Panc1 (cell line): ENCODE measurements at regions of chr6 and their contacts with region 1.

Region 1: GRCh38 chr6:33744001-33744848 is 2.5 kb downstream of the IP6K3 start:
- DNase-seq: peak; percentile 58
- ATAC-seq: peak; percentile 84
- H3K4me3 ChIP-seq: no peak overlapping the region
- H3K27ac ChIP-seq: no peak overlapping the region
- H3K4me1 ChIP-seq: peaks cover 9% of the 10 kb centered on the region
- H3K27me3 ChIP-seq: no peaks in the 10 kb centered on the region
- CTCF ChIP-seq: peak; percentile 95

Region 2: GRCh38 chr6:33711140-33712129 is 32.8 kb before region 1 on chr6 and contains the start of gene UQCC2:
- CTCF ChIA-PET with region 1: interaction called, 12 read pairs
- POLR2A ChIA-PET with region 1: no interaction called
- in situ Hi-C with region 1: no loop called
- intact Hi-C with region 1: no loop called
- DNase-seq: peak; percentile 76
- ATAC-seq: peak; percentile 98
- H3K4me3 ChIP-seq: peak within 1 kb of the TSS; percentile 68 to 88
- H3K27ac ChIP-seq: peak within 1 kb of the TSS; percentile 93
- H3K4me1 ChIP-seq: peaks cover 8% of the 10 kb centered on the region
- H3K27me3 ChIP-seq: no peaks in the 10 kb centered on the region
- CTCF ChIP-seq: peak; percentile 91
- total RNA-seq, gene UQCC2: 135 TPM

Region 3: DNA sequence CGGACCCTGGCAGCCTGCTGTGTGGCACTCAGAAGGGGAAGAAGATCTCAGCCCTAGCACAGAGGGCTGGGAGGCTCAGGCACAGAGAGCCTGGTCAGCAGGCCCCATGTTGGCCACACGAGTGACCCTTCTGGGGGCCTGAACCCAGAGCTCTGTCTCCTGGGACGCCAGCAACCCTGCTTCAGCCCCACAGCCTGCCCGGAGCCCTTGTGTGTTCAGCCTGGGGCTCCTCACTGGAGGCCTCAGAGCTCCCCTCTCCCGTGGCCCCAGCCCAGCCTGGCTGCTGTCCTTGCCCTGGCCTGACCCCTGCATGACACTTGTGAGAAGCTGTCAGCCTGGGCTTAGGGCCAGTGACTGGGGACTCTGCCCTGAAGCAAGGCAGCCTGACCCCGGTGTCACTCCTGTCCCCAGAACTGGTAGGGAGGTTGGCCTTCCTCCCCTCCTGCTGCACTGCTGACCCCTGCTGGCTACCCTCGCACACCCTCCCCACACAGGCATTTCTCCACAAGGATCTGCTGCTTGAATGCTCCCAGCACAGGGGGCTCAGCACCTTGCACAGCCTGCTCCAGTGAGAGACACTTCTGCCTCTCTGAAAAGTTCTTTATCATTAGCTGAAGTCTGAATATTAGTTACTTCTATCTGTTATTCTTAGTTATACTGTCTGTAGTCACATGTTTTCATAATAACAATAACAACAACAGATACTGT is 17.9 kb after region 1 on chr6:
- CTCF ChIA-PET with region 1: interaction called, 24 read pairs
- POLR2A ChIA-PET with region 1: no interaction called
- in situ Hi-C with region 1: no loop called
- intact Hi-C with region 1: no loop called
- DNase-seq: no peak
- ATAC-seq: peak; percentile 93
- H3K4me3 ChIP-seq: no peak overlapping the region
- H3K27ac ChIP-seq: no peak overlapping the region
- H3K4me1 ChIP-seq: peaks cover 15% of the 10 kb centered on the region
- H3K27me3 ChIP-seq: no peaks in the 10 kb centered on the region
- CTCF ChIP-seq: peak; percentile 93

Region 4: DNA sequence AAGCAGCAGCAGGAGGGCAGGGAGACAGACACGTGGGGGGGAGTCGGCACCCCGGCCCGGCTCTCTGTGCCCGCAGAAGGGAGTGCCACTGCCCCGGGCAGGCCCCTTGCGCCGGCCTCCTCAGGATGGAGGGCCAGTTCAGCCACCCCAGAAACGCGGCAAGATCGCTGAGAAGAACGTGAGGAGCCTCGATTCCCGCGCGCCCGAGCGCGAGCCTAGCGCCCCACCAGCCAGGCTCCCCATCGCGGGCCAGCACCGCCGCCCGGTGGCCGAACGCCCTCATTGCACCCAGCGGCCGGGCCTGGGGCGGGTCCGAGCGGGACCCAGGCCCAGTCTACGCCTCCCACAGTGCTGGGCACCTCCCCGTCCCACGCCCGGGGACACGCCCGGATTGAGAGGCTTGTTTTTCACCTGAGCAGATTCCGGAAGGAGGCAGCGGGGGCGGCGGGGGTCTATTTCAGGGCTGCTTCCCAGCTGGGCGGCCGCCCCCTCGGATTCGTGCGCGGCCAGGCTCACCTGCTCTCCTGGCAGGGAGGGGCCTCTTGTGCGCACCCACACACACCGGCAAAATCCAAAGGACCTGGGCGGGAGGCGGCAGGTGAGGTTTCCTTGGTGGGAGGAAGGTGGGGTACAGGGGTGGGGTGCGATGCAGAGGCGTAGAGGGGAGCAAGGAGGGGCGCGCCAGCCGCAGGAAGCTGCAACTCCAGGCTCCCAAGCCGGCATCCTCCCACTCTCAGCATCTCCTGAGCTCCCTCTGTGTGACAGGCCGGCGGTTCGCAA is 410.6 kb after region 1 on chr6:
- CTCF ChIA-PET with region 1: interaction called, 5 read pairs
- POLR2A ChIA-PET with region 1: no interaction called
- in situ Hi-C with region 1: no loop called
- intact Hi-C with region 1: loop called (anchors 10 kb)
- DNase-seq: no peak
- ATAC-seq: peak; percentile 86
- H3K4me3 ChIP-seq: peak overlapping the region; percentile 19 to 46
- H3K27ac ChIP-seq: no peak overlapping the region
- H3K4me1 ChIP-seq: no peaks in the 10 kb centered on the region
- H3K27me3 ChIP-seq: no peaks in the 10 kb centered on the region
- CTCF ChIP-seq: peak; percentile 99